Naive thymus-derived CD4-positive, alpha-beta T cell (primary cell): ENCODE measurements at regions of chr12 and their contacts with region 1.

Region 1: DNA sequence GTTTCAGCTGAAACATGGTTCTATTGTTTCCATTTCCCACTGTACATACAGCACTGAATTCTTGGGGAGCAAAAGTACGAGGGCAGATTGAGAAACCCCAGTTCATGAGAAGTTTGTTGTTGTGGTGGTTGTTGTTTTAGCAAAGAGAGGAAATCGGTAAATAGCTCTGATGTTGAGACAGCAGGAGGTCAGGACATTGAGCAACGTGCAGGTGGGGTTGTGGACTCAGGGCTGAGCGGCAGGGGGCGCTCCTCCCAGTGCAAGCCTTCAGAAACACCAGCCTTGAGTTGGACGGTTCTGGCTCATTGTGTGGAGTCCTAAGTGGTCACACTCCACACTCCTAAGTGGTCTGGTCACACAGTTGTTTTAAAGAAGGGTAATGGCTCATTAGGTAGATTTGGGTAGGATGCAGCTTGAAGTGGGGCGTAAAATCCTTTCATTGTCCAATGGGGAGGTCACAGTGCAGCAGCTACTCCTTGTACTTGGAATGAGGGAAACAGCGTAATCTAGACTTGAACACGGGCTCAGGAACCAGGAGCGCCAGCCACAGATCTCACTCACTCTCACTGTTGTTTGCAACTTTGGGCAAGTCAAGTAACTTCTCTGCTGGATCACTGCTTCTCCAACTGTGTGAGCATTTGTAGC is 14.5 kb upstream of the PWP1 start:
- DNase-seq: peak in 2 of 9 donors; percentile 14 to 44
- ATAC-seq: peak; percentile 67
- H3K4me3 ChIP-seq: no peak overlapping the region
- H3K4me3 Mint-ChIP-seq: no peak overlapping the region
- H3K27ac ChIP-seq: no peak overlapping the region
- H3K27ac Mint-ChIP-seq: peak overlapping the region in 1 of 9 donors; percentile 69
- H3K4me1 ChIP-seq: no peaks in the 10 kb centered on the region
- H3K4me1 Mint-ChIP-seq: peaks cover 0 to 7% (median 5%) of the 10 kb centered on the region in 7 donors
- H3K27me3 ChIP-seq: no peaks in the 10 kb centered on the region
- H3K27me3 Mint-ChIP-seq: peaks cover 7 to 25% (median 21%) of the 10 kb centered on the region in 5 donors

Region 2: DNA sequence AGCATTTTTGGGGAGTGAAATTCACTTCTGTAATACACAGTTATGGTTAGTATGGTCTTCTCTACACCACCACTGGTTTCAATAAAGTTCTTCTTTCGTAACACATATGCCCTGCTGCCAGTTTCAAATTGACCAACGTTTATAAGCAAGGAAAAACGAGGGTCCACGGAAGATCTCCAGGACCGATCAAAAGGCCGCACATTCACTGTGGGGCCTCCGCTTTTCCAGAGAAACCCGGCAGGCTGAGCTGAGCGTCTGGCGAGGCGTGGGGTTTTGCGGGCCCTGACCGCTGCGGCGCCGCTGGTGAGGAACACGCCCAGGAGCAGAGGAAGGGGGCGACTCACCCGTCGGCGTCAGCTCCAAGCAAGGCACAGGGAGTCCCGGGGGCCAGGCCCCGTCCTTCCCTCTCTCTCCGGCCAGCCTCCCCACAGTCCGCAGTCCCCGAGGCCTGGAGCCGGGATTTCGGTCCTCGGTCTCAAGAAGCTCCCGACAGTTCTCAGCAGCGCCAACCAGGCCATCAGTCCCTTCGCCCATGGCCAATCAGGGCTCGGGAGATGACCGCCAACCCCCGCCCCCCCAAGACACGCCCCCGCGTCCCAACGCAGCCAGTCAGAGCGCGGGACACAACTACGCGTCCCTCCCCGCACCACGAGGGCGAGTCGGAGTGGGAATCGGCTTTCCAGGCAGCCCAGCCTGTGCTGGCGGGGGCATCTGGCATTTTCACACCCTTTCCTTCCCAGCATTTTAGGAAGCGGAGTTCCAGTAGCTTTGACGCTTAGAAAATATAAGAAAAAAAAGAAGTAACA is 684.3 kb before region 1 on chr12 and contains the start of gene MTERF2:
- CTCF ChIA-PET with region 1: no interaction called
- POLR2A ChIA-PET with region 1: no interaction called
- intact Hi-C with region 1: no loop called
- DNase-seq: peak; percentile 52 to 78 (median 67)
- ATAC-seq: peak; percentile 99
- H3K4me3 ChIP-seq: peak within 1 kb of the TSS; percentile 88
- H3K4me3 Mint-ChIP-seq: peak within 1 kb of the TSS; percentile 91 to 97 (median 96)
- H3K27ac ChIP-seq: peak within 1 kb of the TSS; percentile 77
- H3K27ac Mint-ChIP-seq: peak within 1 kb of the TSS; percentile 79 to 92 (median 85)
- H3K4me1 ChIP-seq: peaks cover 12 to 14% of the 10 kb centered on the region in 2 donors
- H3K4me1 Mint-ChIP-seq: peaks cover 29 to 45% (median 41%) of the 10 kb centered on the region in 7 donors
- H3K27me3 ChIP-seq: no peaks in the 10 kb centered on the region
- H3K27me3 Mint-ChIP-seq: peaks cover 0 to 2% (median 0%) of the 10 kb centered on the region in 5 donors
- total RNA-seq, gene MTERF2: 7.1 to 12.9 (median 9.7) TPM

Region 3: DNA sequence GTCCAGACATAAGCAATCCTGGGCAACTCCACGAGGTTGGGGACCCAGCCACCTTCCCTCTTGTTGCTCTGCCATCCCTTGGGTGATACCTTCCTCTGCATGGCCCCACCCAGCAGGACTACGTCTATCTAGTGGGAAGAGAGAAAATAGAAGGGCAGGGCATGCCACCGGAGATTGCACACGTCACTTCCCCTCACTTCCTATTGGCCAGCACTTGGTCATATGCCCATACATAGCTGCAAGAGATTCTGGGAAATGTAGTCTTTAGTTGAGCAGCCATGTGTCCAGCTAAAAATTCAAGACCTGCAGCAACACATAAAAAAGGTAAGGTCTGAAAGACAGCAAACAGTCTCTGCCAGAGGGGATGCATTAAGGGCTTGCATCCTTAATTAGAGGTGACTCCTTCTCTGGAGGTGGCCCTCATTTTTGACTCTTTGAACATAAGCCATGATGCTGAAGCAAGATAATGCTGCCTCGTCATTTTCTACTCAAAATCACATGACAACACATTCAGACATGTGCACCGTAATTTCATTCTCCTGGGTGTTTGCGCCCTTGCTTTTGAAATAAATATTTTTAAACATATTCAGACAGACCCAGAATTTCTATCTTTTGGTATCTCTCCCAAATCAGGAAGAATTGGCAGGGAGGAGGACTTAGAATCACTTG is 77.3 kb before region 1 on chr12:
- CTCF ChIA-PET with region 1: no interaction called
- POLR2A ChIA-PET with region 1: no interaction called
- intact Hi-C with region 1: no loop called
- DNase-seq: no peak
- ATAC-seq: no peak
- H3K4me3 ChIP-seq: no peak overlapping the region
- H3K4me3 Mint-ChIP-seq: no peak overlapping the region
- H3K27ac ChIP-seq: no peak overlapping the region
- H3K27ac Mint-ChIP-seq: no peak overlapping the region
- H3K4me1 ChIP-seq: no peaks in the 10 kb centered on the region
- H3K4me1 Mint-ChIP-seq: peaks cover 0 to 5% (median 0%) of the 10 kb centered on the region in 7 donors
- H3K27me3 ChIP-seq: no peaks in the 10 kb centered on the region
- H3K27me3 Mint-ChIP-seq: no peaks in the 10 kb centered on the region

Region 4: DNA sequence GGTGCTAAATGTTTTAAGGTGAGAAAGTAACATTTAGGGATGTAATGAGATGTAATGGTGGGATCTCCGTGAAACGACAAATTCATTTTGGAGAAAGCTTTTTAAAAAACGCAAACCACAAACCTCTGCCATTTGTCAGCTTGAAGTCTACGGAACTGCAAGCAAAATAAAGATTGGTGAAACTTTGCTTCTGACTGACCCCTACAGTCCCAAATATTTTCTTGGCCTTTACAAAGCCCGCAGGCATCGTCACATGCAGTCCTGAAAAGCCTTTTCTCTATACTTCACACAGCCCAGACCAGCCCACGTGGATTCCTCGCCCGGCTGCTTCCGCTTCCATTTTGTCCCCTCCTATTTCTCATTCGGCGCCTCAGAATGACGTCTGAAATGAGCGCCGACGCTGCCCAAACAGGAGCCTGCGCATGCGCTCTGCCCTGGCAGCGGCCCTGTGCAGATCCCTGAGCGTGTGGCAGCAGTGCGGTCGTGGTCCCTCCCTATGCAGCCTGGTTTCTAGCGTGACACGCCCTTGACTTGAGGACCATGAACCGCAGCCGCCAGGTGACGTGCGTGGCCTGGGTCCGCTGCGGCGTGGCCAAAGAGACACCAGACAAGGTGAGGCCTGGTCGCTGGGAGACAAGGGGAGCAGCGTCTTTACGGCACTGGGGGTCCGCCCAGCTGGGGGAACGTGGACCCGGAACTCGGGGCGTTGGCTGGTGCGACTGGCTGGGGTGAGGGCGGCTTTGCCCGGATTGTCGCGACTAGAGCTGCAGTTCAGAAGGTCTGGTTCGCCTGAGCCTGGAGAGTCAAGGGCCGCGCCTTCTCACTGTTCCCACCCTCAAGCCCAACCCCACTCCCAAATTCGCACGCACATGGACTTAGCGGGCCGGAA is 14.5 kb after region 1 on chr12 and contains the start of gene PWP1:
- CTCF ChIA-PET with region 1: interaction called, 4 read pairs
- POLR2A ChIA-PET with region 1: interaction called, 3 read pairs
- intact Hi-C with region 1: loop called in 1 of 2 experiments (anchors 1 kb)
- DNase-seq: peak; percentile 93 to 97 (median 95)
- ATAC-seq: peak; percentile 93
- H3K4me3 ChIP-seq: peak within 1 kb of the TSS; percentile 78
- H3K4me3 Mint-ChIP-seq: peak within 1 kb of the TSS; percentile 90 to 99 (median 95)
- H3K27ac ChIP-seq: peak within 1 kb of the TSS; percentile 88
- H3K27ac Mint-ChIP-seq: peak within 1 kb of the TSS; percentile 90 to 99 (median 97)
- H3K4me1 ChIP-seq: peaks cover 12 to 19% of the 10 kb centered on the region in 2 donors
- H3K4me1 Mint-ChIP-seq: peaks cover 23 to 40% (median 35%) of the 10 kb centered on the region in 7 donors
- H3K27me3 ChIP-seq: no peaks in the 10 kb centered on the region
- H3K27me3 Mint-ChIP-seq: peaks cover 0 to 3% (median 0%) of the 10 kb centered on the region in 5 donors
- total RNA-seq, gene PWP1: 20.9 to 42.5 (median 25.7) TPM

Region 5: DNA sequence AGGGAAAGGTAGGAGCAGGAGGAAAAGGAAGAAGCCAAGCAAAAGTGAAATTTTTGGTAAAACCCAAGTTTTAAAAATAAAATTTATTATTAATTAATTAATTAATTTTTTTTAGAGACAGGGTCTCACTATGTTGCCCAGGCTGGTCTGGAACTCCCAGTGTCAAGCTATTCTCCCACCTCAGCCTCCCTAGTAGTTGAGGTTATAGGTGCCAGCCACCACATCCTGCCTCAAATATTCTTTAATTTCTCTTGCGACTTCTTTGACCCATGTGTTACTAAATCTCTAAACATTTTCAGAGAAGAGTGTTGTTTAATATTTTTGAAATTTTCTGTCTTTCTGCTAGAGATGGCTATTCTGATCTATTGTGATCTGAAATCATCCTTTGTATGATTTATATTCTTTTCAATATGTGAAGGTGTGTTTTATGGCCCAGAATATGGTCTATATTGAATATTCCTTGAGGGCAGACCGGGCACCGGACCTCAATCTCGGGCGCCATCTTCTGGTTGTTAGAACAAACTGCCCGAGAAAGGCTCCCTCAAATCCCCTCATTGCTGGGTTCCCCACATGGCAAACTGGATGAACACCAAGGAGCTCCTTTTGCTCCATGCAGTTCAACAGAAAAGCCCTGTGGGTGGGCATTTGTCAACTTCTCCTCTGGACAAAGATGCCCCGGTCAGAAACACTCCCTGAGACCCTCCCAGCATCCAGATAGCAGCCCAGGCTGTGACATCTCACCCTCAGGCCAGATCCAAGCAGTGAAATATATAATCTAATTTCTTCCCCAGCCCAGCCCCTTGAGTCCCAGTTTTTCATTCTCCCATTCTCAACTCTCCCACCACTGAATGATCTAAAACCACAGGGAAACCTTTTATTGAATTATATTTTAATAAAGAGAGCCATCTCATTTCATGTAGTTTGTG is 213.9 kb after region 1 on chr12:
- CTCF ChIA-PET with region 1: interaction called, 4 read pairs
- POLR2A ChIA-PET with region 1: no interaction called
- intact Hi-C with region 1: loop called in 1 of 2 experiments (anchors 1 kb)
- DNase-seq: peak in 5 of 9 donors; percentile 5 to 29 (median 13)
- ATAC-seq: peak; percentile 60
- H3K4me3 ChIP-seq: no peak overlapping the region
- H3K4me3 Mint-ChIP-seq: no peak overlapping the region
- H3K27ac ChIP-seq: no peak overlapping the region
- H3K27ac Mint-ChIP-seq: no peak overlapping the region
- H3K4me1 ChIP-seq: no peaks in the 10 kb centered on the region
- H3K4me1 Mint-ChIP-seq: no peaks in the 10 kb centered on the region
- H3K27me3 ChIP-seq: no peaks in the 10 kb centered on the region
- H3K27me3 Mint-ChIP-seq: peaks cover 7 to 21% (median 13%) of the 10 kb centered on the region in 5 donors